Activated naive CD4-positive, alpha-beta T cell treated with anti-CD3 and anti-CD28 coated beads for 36 hours (primary cell): ENCODE measurements at regions of chr9 and their contacts with region 1.

Region 1: GRCh38 chr9:19464764-19465585 is 56.2 kb downstream of the ACER2 start:
- DNase-seq: peak; percentile 69
- H3K4me3 Mint-ChIP-seq: peak overlapping the region; percentile 81
- H3K27ac Mint-ChIP-seq: no peak overlapping the region
- H3K4me1 Mint-ChIP-seq: peaks cover 9% of the 10 kb centered on the region
- H3K27me3 Mint-ChIP-seq: no peaks in the 10 kb centered on the region

Region 2: DNA sequence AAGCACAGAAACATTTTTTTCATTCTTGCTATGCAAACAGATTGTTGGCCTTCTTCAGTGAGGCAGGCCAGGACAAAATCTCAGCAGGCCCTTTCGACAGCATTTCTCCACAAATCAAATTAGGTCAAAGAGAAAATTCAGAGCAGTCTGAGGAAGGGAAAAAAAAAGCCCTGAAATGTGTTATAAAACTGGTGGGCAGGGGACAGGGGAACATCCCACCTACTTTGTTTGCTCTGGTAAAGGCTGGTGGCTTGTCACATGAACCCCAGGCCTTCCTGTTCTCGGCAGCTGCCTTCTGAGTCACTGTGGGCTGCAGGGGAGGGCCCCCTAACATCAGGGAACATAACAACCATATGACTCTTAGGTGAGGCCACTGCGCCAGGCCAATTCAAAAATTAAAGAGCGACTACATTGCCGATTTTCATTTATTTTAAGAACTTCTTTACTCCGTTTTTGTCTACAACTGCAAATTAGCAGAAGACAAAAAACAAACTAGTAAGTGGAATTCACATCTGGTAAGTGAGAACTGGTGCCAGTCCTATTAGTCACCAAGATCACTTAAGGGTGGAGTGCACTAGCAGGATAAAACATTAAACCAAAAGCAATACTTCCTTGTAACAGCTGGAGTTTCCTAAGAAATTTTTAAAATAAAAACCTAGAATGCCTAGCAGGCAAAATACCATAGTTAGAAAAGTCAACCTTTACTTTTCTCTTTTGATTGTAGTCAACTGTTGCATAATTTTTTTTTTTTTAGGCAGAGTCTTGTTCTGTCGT is 280.6 kb before region 1 on chr9:
- CTCF ChIA-PET with region 1: interaction called, 13 read pairs
- intact Hi-C with region 1: no loop called
- DNase-seq: peak; percentile 92
- H3K4me3 Mint-ChIP-seq: peak overlapping the region; percentile 47
- H3K27ac Mint-ChIP-seq: peak overlapping the region; percentile 89
- H3K4me1 Mint-ChIP-seq: peaks cover 14% of the 10 kb centered on the region
- H3K27me3 Mint-ChIP-seq: no peaks in the 10 kb centered on the region

Region 3: DNA sequence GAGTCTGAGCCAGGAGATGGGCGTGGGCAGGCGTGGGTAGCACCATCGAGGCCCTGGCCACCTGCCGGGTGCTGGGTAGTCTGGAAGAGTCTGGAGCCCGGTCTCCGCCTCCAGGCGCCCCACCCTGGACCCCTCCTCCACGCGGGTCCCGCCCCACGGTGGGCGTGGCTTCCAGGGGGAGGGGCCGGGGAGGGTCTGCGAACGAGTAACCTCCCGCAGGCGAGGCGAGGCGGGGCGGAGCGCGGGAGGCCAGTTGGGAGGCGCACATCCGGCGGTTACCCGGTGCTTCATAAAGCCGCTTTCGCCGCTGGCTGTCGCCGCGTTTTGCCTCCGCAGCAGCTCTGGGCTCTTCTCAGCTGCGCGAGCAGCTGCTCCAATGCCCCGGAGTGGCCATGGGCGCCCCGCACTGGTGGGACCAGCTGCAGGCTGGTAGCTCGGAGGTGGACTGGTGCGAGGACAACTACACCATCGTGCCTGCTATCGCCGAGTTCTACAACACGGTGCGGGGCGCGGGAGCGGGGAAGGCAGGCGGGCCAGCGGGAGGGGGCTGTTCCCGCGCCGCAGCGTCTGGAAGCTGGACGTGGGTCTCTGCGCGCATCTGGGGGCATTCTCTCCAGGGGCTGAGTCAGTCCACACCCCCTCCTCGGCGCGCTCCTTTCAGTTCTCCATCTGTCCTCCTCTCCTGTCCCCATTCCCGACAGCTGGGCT is 56.1 kb before region 1 on chr9 and contains the start of gene ACER2:
- CTCF ChIA-PET with region 1: interaction called, 6 read pairs
- intact Hi-C with region 1: loop called (anchors 2 kb)
- DNase-seq: peak; percentile 94
- H3K4me3 Mint-ChIP-seq: peak within 1 kb of the TSS; percentile 87
- H3K27ac Mint-ChIP-seq: no peak within 1 kb of the TSS
- H3K4me1 Mint-ChIP-seq: peaks cover 14% of the 10 kb centered on the region
- H3K27me3 Mint-ChIP-seq: no peaks in the 10 kb centered on the region
- total RNA-seq, gene ACER2: 2.0 to 2.2 TPM

Region 4: DNA sequence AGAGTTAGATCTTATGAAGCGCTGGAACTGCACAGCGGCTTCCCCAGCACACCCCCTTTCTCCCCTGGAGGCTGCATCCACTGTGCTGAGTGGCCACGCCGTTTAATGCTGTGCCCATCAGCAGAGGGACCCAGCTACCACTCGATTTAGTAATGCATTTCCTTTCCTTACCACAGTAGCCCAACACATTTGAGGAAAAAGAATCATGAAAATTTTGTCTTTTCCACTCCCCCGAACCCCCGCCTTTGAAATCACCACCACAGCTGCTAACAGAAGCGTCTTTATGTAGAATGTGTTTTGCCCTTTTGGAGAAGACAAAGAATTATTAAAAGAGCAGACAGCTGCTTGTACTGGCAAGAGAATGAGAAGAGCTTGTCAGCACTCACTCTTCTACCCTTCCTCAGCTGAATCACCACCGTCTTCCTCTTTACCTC is 17.0 kb after region 1 on chr9:
- CTCF ChIA-PET with region 1: interaction called, 25 read pairs
- intact Hi-C with region 1: no loop called
- DNase-seq: no peak
- H3K4me3 Mint-ChIP-seq: no peak overlapping the region
- H3K27ac Mint-ChIP-seq: no peak overlapping the region
- H3K4me1 Mint-ChIP-seq: peaks cover 2% of the 10 kb centered on the region
- H3K27me3 Mint-ChIP-seq: peaks cover 4% of the 10 kb centered on the region

Region 5: DNA sequence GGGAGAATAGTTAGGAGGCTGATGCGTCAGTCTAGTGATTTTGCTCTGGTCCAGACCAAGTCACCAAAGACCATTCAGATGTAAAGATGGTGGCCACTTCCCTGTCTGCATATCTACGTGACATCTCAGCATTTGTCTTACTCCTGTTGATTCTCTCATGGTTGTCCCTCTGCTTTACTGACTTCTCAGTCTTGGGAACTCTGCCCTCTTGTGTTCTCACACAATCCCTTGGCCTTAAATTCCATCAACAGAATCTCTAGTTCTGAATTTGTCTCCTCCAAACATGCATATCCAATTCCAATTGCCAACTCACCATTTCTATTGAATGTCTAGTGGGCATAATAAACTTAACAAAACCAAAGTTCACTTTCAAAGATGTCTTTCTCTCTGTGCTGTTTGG is 176.1 kb after region 1 on chr9:
- CTCF ChIA-PET with region 1: interaction called, 11 read pairs
- intact Hi-C with region 1: no loop called
- DNase-seq: no peak
- H3K4me3 Mint-ChIP-seq: no peak overlapping the region
- H3K27ac Mint-ChIP-seq: no peak overlapping the region
- H3K4me1 Mint-ChIP-seq: no peaks in the 10 kb centered on the region
- H3K27me3 Mint-ChIP-seq: peaks cover 15% of the 10 kb centered on the region